Transverse colon (tissue), 4 donors: ENCODE measurements at regions of chr6 and their contacts with region 1.

Region 1: DNA sequence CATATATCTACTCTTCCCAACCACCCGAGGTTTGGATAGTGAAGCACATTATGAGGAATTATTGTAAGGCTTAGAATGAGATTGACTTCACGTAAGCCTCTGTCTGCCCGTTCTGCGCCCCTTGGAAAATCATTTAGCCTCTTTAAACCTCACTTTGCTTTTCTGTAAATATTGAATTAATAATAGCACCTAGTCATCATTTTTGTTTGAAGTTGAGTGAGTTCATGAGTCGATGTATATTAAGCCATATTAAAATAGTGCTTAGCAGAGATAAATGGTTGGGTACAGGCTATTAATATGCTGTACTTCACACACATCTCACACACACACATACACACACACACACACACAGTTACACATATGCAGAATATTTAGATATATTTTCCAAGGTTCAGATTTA is 344.8 kb upstream of the EYS start:
- DNase-seq: no peak
- H3K4me3 ChIP-seq: no peak overlapping the region
- H3K27ac ChIP-seq: no peak overlapping the region
- H3K4me1 ChIP-seq: no peaks in the 10 kb centered on the region
- H3K27me3 ChIP-seq: no peaks in the 10 kb centered on the region
- CTCF ChIP-seq: no peak
- EP300 ChIP-seq: no peak
- POLR2A ChIP-seq: no peak

Region 2: DNA sequence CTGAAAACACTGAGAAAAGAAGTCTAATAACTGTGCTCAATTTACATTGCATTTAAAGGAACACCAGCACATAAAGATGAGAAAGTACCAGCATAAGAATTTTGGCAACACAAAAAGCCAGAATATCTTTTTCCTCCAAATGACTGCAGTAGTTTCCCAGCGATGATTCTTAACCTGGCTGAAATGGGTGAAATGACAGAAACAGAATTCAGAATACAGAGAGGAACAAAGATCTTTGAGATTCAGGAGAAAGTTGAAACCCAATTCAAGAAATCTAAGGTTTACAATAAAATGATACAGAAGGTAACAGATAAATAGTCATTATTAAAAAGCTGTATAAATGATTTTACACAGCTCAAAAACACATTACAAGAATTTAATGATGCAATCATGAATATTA is 147.8 kb before region 1 on chr6:
- in situ Hi-C with region 1: no loop called
- intact Hi-C with region 1: loop called (anchors 2 kb)
- DNase-seq: no peak
- H3K4me3 ChIP-seq: no peak overlapping the region
- H3K27ac ChIP-seq: no peak overlapping the region
- H3K4me1 ChIP-seq: no peaks in the 10 kb centered on the region
- H3K27me3 ChIP-seq: no peaks in the 10 kb centered on the region
- CTCF ChIP-seq: no peak
- EP300 ChIP-seq: no peak
- POLR2A ChIP-seq: no peak

Region 3: DNA sequence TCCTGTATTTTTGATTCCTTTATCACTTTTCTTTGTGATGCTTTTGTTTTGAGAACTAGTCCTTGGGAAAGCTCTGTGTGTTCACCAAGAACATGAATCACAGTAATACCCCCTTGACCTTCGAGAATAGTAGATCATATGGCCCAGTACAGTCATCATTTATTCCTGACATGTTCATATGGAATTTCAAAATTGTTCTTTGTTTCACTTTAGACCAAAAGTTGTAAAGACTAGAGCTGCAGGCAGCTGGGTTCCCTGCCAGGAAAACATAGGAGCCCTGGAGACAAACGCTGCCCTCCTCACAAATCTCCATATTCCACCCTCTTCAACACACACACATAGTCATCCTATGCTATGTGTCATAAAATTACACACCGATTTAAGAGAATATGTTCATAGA is 276.4 kb after region 1 on chr6:
- in situ Hi-C with region 1: no loop called
- intact Hi-C with region 1: no loop called
- DNase-seq: no peak
- H3K4me3 ChIP-seq: no peak overlapping the region
- H3K27ac ChIP-seq: no peak overlapping the region
- H3K4me1 ChIP-seq: no peaks in the 10 kb centered on the region
- H3K27me3 ChIP-seq: no peaks in the 10 kb centered on the region
- CTCF ChIP-seq: no peak
- EP300 ChIP-seq: no peak
- POLR2A ChIP-seq: no peak

Region 4: GRCh38 chr6:67666177-67666964 is 1614.6 kb after region 1 on chr6:
- in situ Hi-C with region 1: no loop called
- intact Hi-C with region 1: no loop called
- DNase-seq: no peak
- H3K4me3 ChIP-seq: no peak overlapping the region
- H3K27ac ChIP-seq: no peak overlapping the region
- H3K4me1 ChIP-seq: no peaks in the 10 kb centered on the region
- H3K27me3 ChIP-seq: no peaks in the 10 kb centered on the region
- CTCF ChIP-seq: no peak
- EP300 ChIP-seq: no peak
- POLR2A ChIP-seq: no peak